Calu3 (cell line): ENCODE measurements at regions of chr7 and their contacts with region 1.

Region 1: DNA sequence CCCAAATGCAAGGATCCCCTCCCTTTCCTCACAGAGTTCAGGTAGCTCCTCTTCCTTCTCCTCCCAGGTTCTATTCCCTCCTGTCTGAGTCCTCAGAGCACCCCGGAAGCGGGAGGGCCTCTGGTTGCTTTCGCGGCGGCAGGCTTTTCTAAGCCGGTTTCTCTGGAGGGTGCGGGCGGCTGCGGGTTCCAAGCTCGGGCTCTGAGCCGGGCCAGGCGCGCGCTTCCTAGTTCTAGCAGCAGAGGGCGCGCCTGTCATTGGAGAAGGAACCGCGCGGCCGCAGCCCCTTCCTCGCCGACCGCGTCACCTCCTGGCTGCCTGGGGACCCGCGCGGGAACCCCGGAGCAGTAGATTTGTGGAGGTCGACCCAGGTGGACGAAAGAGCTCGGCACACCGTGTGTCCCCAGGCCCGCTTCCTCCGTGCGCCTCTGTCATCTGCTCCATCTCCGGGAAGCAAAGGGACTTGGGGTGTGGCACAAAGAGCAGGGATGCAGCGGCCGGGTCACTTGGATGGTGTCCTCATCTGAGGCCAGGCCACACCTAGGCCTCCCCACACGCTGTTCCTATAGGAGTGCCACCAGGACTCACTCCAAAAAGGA is 389.0 kb upstream of the PODXL start:
- DNase-seq: peak; percentile 66
- H3K4me3 Mint-ChIP-seq: no peak overlapping the region
- H3K27ac Mint-ChIP-seq: no peak overlapping the region
- H3K4me1 Mint-ChIP-seq: peaks cover 7% of the 10 kb centered on the region
- H3K27me3 Mint-ChIP-seq: peaks cover 81% of the 10 kb centered on the region
- CTCF ChIP-seq: peak; percentile 85

Region 2: GRCh38 chr7:132049462-132050304 is 104.3 kb after region 1 on chr7:
- CTCF ChIA-PET with region 1: interaction called, 4 read pairs
- intact Hi-C with region 1: loop called (anchors 1 kb)
- DNase-seq: peak; percentile 70
- H3K4me3 Mint-ChIP-seq: no peak overlapping the region
- H3K27ac Mint-ChIP-seq: no peak overlapping the region
- H3K4me1 Mint-ChIP-seq: no peaks in the 10 kb centered on the region
- H3K27me3 Mint-ChIP-seq: peaks cover 64% of the 10 kb centered on the region
- CTCF ChIP-seq: peak; percentile 68

Region 3: DNA sequence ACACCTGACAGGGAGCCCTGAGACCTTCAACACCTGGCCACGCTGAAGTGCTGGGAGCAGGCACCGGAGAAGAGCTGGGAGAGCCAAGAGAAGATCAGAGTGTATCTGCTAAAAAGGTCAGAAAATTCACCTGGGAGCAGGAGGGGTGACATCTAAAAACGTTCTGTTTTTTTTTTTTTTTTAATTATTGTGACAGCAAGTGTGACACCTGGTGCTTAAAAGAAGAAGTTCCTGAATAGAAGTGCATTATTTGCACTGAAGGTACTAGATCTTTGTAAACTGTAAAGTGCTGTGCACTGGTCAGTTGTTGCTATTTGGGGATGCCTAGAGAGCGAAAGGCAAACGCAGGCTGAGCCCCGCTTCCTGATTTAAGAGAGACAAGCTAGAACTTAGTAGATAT is 208.8 kb after region 1 on chr7:
- CTCF ChIA-PET with region 1: interaction called, 3 read pairs
- intact Hi-C with region 1: loop called (anchors 5 kb)
- DNase-seq: no peak
- H3K4me3 Mint-ChIP-seq: no peak overlapping the region
- H3K27ac Mint-ChIP-seq: no peak overlapping the region
- H3K4me1 Mint-ChIP-seq: no peaks in the 10 kb centered on the region
- H3K27me3 Mint-ChIP-seq: peaks cover 100% of the 10 kb centered on the region
- CTCF ChIP-seq: no peak

Region 4: DNA sequence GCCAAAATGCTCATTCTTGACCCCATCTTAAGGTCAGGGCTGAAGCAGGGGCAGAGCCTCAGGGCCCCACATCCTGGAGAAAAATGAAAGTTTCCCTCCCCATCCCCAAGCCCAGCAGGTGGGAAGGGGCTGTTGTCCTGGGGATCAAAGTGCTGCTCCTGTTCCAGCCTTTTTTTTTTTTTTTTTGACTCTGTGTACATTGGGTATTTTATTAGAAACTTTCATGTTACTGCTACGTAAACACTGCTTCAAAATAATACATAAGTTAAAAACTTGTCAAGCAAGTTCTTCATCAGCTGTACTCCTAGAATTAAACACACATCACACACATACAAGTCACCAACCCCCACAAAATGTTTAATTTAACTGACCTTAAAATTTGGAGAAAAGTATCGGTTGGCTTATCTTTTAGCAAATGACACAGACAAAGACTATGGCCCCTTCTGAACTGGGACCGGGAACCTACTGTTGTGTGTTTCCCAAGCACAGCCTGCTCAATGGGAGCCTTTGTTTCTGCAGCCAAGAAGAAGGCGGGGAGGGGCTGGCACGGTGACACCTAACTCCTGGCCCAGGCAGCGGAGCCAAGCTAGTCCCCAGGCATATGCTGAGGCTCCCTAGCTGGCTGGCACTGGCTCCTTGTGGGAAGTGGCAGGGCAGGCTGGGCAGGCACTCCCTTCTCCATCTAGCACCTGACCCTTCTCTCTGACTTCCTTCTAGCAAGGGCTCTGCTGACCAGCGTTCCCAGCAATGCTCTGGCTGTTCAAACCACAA is 305.7 kb after region 1 on chr7:
- CTCF ChIA-PET with region 1: interaction called, 8 read pairs
- intact Hi-C with region 1: loop called (anchors 2 kb)
- DNase-seq: peak; percentile 93
- H3K4me3 Mint-ChIP-seq: peak overlapping the region; percentile 37
- H3K27ac Mint-ChIP-seq: peak overlapping the region; percentile 90
- H3K4me1 Mint-ChIP-seq: peaks cover 33% of the 10 kb centered on the region
- H3K27me3 Mint-ChIP-seq: no peaks in the 10 kb centered on the region
- CTCF ChIP-seq: no peak

Region 5: DNA sequence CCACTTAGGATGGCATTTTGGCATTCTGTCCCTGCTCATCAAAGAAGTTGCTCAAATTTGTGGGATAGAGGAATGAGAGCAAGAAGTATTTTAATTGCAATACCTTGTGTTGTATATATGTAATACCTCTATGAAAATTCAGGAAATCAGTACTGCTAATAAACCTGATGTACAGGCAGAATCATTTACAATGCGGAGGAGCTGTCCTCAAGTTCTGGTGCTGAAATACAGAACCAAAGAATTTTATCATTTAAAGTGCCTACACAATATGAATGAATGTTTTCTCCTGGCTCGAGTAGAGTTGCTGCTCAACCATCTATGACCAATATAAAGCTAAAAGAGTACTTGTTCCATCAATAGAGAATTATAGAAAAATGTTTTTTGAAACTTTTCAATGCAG is 325.1 kb after region 1 on chr7:
- CTCF ChIA-PET with region 1: no interaction called
- intact Hi-C with region 1: no loop called
- DNase-seq: no peak
- H3K4me3 Mint-ChIP-seq: no peak overlapping the region
- H3K27ac Mint-ChIP-seq: no peak overlapping the region
- H3K4me1 Mint-ChIP-seq: no peaks in the 10 kb centered on the region
- H3K27me3 Mint-ChIP-seq: peaks cover 83% of the 10 kb centered on the region
- CTCF ChIP-seq: no peak